Activated naive CD4-positive, alpha-beta T cell treated with anti-CD3 and anti-CD28 coated beads, Interleukin-2, amount 10 ng/mL, durations not matched to agents 7 days and 5 days (primary cell): ENCODE measurements at regions of chr1 and their contacts with region 1.

Region 1: DNA sequence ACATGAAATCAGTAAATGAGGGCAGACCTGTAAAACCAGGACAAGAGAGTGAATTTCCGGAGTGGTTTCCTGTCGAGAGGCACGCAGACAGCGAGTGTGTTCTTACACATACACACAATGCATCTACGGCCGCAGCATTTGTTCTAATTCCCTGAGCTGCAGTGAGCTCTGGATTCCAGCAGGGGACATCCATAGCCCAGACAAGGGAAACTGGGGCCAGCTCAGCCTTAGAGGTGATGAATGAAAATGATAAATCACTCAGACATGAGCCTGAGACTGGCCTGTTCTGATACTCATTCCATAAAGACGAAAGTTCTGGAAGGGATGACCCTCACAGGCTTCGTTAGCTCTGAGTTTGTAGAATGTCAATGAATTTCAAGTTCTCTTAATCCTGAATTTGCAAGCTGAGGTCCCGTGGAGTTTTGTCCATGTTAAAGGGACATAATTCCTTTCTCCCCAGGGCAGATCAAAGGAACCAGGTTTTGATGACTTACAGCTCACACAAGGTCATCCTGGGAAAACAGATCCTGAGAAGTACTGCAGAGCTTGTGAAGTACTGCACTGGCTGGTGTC is 207.9 kb upstream of the C1orf87 start:
- DNase-seq: peak; percentile 30
- H3K4me3 Mint-ChIP-seq: no peak overlapping the region
- H3K27ac Mint-ChIP-seq: no peak overlapping the region
- H3K4me1 Mint-ChIP-seq: peaks cover 8% of the 10 kb centered on the region
- H3K27me3 Mint-ChIP-seq: no peaks in the 10 kb centered on the region

Region 2: GRCh38 chr1:60573726-60574409 is 292.4 kb after region 1 on chr1:
- CTCF ChIA-PET with region 1: no interaction called
- DNase-seq: no peak
- H3K4me3 Mint-ChIP-seq: no peak overlapping the region
- H3K27ac Mint-ChIP-seq: no peak overlapping the region
- H3K4me1 Mint-ChIP-seq: no peaks in the 10 kb centered on the region
- H3K27me3 Mint-ChIP-seq: no peaks in the 10 kb centered on the region

Region 3: DNA sequence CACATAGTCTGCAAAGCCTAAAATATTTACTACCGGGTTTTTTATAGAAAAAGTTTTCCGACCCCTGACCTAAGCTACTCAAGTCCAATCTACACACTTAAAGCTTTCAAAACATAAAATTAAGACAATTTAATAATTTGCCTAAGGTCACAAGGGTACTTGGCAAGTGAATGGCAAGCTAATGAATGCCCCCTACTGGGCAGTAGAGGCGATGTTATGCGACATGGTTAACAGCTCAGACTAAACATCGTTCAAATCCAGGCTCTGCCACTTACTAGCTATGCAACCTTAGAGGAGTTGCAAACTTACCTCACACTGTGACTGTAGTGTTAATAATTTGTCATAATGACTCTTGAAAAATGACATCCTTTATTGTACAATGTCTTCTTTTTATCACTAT is 483.8 kb after region 1 on chr1:
- CTCF ChIA-PET with region 1: interaction called, 10 read pairs
- DNase-seq: no peak
- H3K4me3 Mint-ChIP-seq: no peak overlapping the region
- H3K27ac Mint-ChIP-seq: no peak overlapping the region
- H3K4me1 Mint-ChIP-seq: no peaks in the 10 kb centered on the region
- H3K27me3 Mint-ChIP-seq: no peaks in the 10 kb centered on the region